ENCODE measurements at regions of chr12 and their contacts with region 1.

Region 1: DNA sequence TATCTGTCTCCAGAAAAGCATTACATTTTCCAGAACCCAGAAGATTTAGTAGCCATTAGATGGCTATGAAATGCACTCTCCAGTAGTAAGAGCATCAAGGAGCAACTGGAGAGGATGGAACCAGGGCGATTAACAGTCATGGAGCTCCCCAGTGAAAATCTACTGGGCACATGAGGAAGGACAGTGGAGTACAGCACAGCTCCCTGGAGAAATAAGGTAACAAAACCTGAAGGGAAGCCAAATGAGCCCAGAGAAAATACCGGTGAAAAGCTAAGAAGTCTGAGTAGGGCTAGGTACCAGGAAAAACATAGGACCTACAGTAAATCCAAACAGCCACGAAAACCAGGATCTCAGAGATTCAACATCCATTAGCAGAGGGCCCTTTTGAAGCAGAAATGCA is 21.6 kb downstream of the SOX5 start:
- DNase-seq: no peak
- ATAC-seq: no peak
- H3K4me3 Mint-ChIP-seq: no peak overlapping the region
- H3K27ac Mint-ChIP-seq: no peak overlapping the region
- H3K4me1 Mint-ChIP-seq: no peaks in the 10 kb centered on the region
- H3K27me3 Mint-ChIP-seq: no peaks in the 10 kb centered on the region

Region 2: GRCh38 chr12:23536293-23536692 is 391.6 kb before region 1 on chr12:
- CTCF ChIA-PET with region 1: no interaction called
- POLR2A ChIA-PET with region 1: no interaction called
- intact Hi-C with region 1: loop called in 1 of 2 experiments (anchors 5 kb)
- DNase-seq: no peak
- ATAC-seq: no peak
- H3K4me3 Mint-ChIP-seq: no peak overlapping the region
- H3K27ac Mint-ChIP-seq: no peak overlapping the region
- H3K4me1 Mint-ChIP-seq: no peaks in the 10 kb centered on the region
- H3K27me3 Mint-ChIP-seq: no peaks in the 10 kb centered on the region